ENCODE measurements at regions of chrX and their contacts with region 1.

Region 1: GRCh38 chrX:130393451-130394074 is 8.1 kb upstream of the GPR119 start:
- DNase-seq: peak; percentile 45
- H3K27ac ChIP-seq: no peak overlapping the region
- CTCF ChIP-seq: peak; percentile 68

Region 2: GRCh38 chrX:130426531-130426930 is 33.0 kb after region 1 on chrX:
- CTCF ChIA-PET with region 1: no interaction called
- POLR2A ChIA-PET with region 1: no interaction called
- DNase-seq: no peak
- H3K27ac ChIP-seq: no peak overlapping the region
- CTCF ChIP-seq: no peak

Region 3: DNA sequence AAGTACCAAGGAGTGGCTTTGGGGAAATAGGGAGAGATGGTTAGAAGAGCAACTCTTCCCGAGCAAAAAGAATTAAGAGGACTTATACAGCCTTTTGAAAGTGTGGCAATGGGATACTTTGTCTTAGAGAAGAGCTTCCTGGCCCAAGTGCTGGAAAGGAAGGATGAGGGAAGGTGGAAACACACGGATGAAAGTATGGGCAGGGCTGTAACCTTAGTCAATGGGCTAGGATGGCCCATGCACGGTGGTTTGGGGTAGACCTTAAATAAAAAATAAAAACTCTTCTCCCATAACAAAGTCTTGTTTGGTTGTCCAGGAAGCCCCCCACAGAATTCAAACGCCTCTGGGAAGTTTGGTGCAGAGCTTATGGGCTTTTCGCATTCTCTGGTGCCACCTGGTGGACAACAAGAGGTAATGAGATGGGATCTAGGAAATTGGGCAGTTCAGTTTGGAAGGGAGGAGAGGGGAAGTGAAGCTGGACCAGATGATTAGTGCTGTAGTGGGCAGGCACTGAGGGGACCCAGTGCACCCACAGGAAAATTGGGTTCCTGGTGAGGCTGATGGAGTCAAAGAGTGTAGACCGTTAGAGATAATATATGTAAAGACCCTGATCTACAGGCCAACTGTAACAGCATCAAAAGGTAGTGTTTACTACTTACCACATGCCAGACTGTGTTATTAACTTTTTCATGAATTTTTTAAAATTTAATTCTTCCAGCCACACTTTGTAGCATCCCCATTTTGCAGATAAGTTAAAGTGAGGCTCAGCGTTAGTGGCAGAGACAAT is 523.3 kb after region 1 on chrX:
- CTCF ChIA-PET with region 1: interaction called, 11 read pairs
- POLR2A ChIA-PET with region 1: no interaction called
- DNase-seq: peak; percentile 31
- H3K27ac ChIP-seq: no peak overlapping the region
- CTCF ChIP-seq: peak; percentile 54